Naive thymus-derived CD4-positive, alpha-beta T cell (primary cell): ENCODE measurements at regions of chr20 and their contacts with region 1.

Region 1: GRCh38 chr20:44210422-44211176 is at the start of gene OSER1:
- DNase-seq: peak; percentile 98 to 99 (median 99)
- ATAC-seq: peak; percentile 91
- H3K4me3 ChIP-seq: peak within 1 kb of the TSS; percentile 96
- H3K4me3 Mint-ChIP-seq: peak within 1 kb of the TSS; percentile 90 to 100 (median 95)
- H3K27ac ChIP-seq: peak within 1 kb of the TSS; percentile 97
- H3K27ac Mint-ChIP-seq: peak within 1 kb of the TSS; percentile 97 to 99 (median 98)
- H3K4me1 ChIP-seq: peaks cover 23 to 29% of the 10 kb centered on the region in 2 donors
- H3K4me1 Mint-ChIP-seq: peaks cover 45 to 78% (median 72%) of the 10 kb centered on the region in 7 donors
- H3K27me3 ChIP-seq: no peaks in the 10 kb centered on the region
- H3K27me3 Mint-ChIP-seq: peaks cover 0 to 4% (median 0%) of the 10 kb centered on the region in 5 donors
- total RNA-seq, gene OSER1: 25.0 to 115 (median 43.0) TPM

Region 2: DNA sequence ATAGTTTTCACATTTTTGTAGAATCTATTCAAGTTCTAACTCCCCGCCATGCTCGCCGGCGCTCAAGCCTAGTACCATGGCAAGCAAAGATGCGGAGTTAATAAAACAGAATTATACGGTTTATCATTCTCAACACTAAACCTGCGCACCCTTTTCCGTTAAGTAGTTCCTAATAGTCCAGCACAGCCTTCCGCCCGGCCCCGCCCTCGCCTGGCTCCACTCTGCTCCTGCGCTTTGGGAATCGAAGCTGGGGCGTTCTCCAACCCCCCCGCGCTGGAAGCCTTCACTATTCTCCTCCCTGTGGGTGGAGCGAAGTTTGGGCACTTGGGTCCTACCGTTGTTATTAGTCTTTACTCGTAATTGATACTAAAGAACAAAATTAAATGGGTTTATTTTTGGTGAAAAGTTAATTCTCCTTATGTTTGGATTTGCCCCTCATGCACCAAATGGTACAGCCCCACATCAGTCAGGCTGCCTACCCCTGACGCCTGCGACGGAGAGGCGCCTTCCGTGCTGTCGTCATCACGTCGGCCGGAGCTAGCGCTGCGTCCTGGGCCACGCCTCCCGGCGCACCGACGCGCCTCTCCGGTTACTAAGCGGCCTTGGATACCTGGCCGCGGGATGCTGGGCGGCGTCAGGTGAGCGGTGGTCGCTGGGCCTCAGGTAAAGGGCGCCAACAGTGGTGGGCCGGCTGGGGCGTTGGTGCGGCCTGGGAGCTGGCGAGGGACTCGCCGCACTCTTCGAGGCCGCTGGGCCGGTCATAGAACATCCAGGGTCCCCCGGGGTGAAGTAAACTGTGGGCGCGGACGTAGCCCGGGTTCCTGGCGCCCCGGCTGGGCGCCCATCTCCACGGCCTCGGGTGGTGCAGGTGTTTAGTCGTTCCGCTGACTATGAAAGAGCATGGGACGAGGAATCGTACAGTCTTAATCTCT is 619.9 kb before region 1 on chr20 and contains the start of gene IFT52:
- CTCF ChIA-PET with region 1: no interaction called
- POLR2A ChIA-PET with region 1: no interaction called
- intact Hi-C with region 1: loop called (anchors 2 kb)
- DNase-seq: peak; percentile 76 to 89 (median 87)
- ATAC-seq: peak; percentile 98
- H3K4me3 ChIP-seq: peak within 1 kb of the TSS; percentile 90
- H3K4me3 Mint-ChIP-seq: peak within 1 kb of the TSS; percentile 90 to 97 (median 94)
- H3K27ac ChIP-seq: peak within 1 kb of the TSS; percentile 88
- H3K27ac Mint-ChIP-seq: peak within 1 kb of the TSS; percentile 91 to 98 (median 97)
- H3K4me1 ChIP-seq: peaks cover 5 to 10% of the 10 kb centered on the region in 2 donors
- H3K4me1 Mint-ChIP-seq: peaks cover 17 to 21% (median 21%) of the 10 kb centered on the region in 7 donors
- H3K27me3 ChIP-seq: no peaks in the 10 kb centered on the region
- H3K27me3 Mint-ChIP-seq: peaks cover 0 to 5% (median 0%) of the 10 kb centered on the region in 5 donors
- total RNA-seq, gene IFT52: 14.8 to 19.7 (median 16.9) TPM

Region 3: GRCh38 chr20:44069203-44070011 is 141.2 kb before region 1 on chr20:
- CTCF ChIA-PET with region 1: no interaction called
- POLR2A ChIA-PET with region 1: no interaction called
- intact Hi-C with region 1: loop called in 1 of 2 experiments (anchors 1 kb)
- DNase-seq: peak; percentile 47 to 97 (median 90)
- ATAC-seq: peak; percentile 65
- H3K4me3 ChIP-seq: peak overlapping the region; percentile 60
- H3K4me3 Mint-ChIP-seq: peak overlapping the region; percentile 70 to 93 (median 86)
- H3K27ac ChIP-seq: peak overlapping the region; percentile 97
- H3K27ac Mint-ChIP-seq: peak overlapping the region; percentile 94 to 100 (median 99)
- H3K4me1 ChIP-seq: peaks cover 31 to 77% of the 10 kb centered on the region in 2 donors
- H3K4me1 Mint-ChIP-seq: peaks cover 40 to 96% (median 81%) of the 10 kb centered on the region in 7 donors
- H3K27me3 ChIP-seq: no peaks in the 10 kb centered on the region
- H3K27me3 Mint-ChIP-seq: peaks cover 0 to 16% (median 0%) of the 10 kb centered on the region in 5 donors

Region 4: GRCh38 chr20:44196271-44196670 is 14.3 kb before region 1 on chr20:
- CTCF ChIA-PET with region 1: no interaction called
- POLR2A ChIA-PET with region 1: interaction called, 7 read pairs
- intact Hi-C with region 1: loop called in 1 of 2 experiments (anchors 1 kb)
- DNase-seq: peak in 1 of 9 donors; percentile 14
- ATAC-seq: peak; percentile 50
- H3K4me3 ChIP-seq: no peak overlapping the region
- H3K4me3 Mint-ChIP-seq: no peak overlapping the region
- H3K27ac ChIP-seq: no peak overlapping the region
- H3K27ac Mint-ChIP-seq: peak overlapping the region in 2 of 9 donors; percentile 22 to 30
- H3K4me1 ChIP-seq: no peaks in the 10 kb centered on the region
- H3K4me1 Mint-ChIP-seq: peaks cover 16 to 29% (median 20%) of the 10 kb centered on the region in 7 donors
- H3K27me3 ChIP-seq: no peaks in the 10 kb centered on the region
- H3K27me3 Mint-ChIP-seq: peaks cover 0 to 6% (median 0%) of the 10 kb centered on the region in 5 donors

Region 5: GRCh38 chr20:44435630-44436335 is 225.2 kb after region 1 on chr20:
- CTCF ChIA-PET with region 1: no interaction called
- POLR2A ChIA-PET with region 1: no interaction called
- intact Hi-C with region 1: no loop called
- DNase-seq: no peak
- ATAC-seq: peak; percentile 71
- H3K4me3 ChIP-seq: no peak overlapping the region
- H3K4me3 Mint-ChIP-seq: no peak overlapping the region
- H3K27ac ChIP-seq: no peak overlapping the region
- H3K27ac Mint-ChIP-seq: no peak overlapping the region
- H3K4me1 ChIP-seq: no peaks in the 10 kb centered on the region
- H3K4me1 Mint-ChIP-seq: no peaks in the 10 kb centered on the region
- H3K27me3 ChIP-seq: no peaks in the 10 kb centered on the region
- H3K27me3 Mint-ChIP-seq: peaks cover 0 to 25% (median 9%) of the 10 kb centered on the region in 5 donors

Region 6: GRCh38 chr20:44475694-44476560 is 265.3 kb after region 1 on chr20 and contains the start of gene TTPAL:
- CTCF ChIA-PET with region 1: no interaction called
- POLR2A ChIA-PET with region 1: interaction called, 8 read pairs
- intact Hi-C with region 1: loop called (anchors 1 to 5 kb)
- DNase-seq: peak; percentile 83 to 95 (median 89)
- ATAC-seq: peak; percentile 98
- H3K4me3 ChIP-seq: peak within 1 kb of the TSS; percentile 65
- H3K4me3 Mint-ChIP-seq: peak within 1 kb of the TSS; percentile 87 to 96 (median 91)
- H3K27ac ChIP-seq: peak within 1 kb of the TSS; percentile 97
- H3K27ac Mint-ChIP-seq: peak within 1 kb of the TSS; percentile 86 to 97 (median 94)
- H3K4me1 ChIP-seq: peaks cover 12 to 17% of the 10 kb centered on the region in 2 donors
- H3K4me1 Mint-ChIP-seq: peaks cover 14 to 43% (median 31%) of the 10 kb centered on the region in 7 donors
- H3K27me3 ChIP-seq: no peaks in the 10 kb centered on the region
- H3K27me3 Mint-ChIP-seq: no peaks in the 10 kb centered on the region
- total RNA-seq, gene TTPAL: 12.0 to 20.7 (median 17.0) TPM

Region 7: DNA sequence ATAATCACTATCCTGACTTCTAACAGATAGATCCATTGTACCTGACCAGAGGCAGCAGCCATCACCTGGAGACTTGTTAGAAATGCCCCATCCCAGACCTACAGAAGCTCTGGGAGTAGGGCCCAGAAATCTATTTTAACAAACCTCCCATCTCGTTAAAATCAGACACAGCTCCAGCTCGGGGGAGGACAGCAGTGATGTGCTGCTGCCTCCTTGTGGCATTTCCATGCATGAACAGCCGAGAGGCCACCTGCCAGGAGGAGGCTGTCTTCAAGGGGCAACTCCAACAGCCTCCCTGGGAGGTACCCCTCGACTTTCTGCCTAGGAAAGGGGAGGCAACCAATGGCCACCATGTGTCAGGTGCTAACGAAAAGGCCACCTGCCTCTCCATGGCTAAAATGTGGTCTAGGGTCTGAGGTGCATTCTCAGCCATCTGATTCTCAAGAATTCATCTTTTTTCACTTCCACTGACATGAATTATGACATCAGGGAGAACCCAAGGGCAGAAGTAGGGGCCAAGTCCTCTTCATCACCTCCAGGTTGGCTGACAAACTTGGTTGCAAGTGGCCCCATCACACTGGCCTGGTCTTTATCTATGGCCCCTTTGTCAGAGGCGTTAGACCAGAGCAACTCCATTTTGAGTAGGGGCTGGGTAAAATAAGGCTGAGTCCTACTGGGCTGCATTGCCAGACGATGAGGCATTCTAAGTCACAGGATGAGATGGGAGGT is 522.9 kb after region 1 on chr20:
- CTCF ChIA-PET with region 1: interaction called, 3 read pairs
- POLR2A ChIA-PET with region 1: no interaction called
- intact Hi-C with region 1: loop called in 1 of 2 experiments (anchors 2 kb)
- DNase-seq: peak; percentile 34 to 73 (median 57)
- ATAC-seq: peak; percentile 77
- H3K4me3 ChIP-seq: no peak overlapping the region
- H3K4me3 Mint-ChIP-seq: no peak overlapping the region
- H3K27ac ChIP-seq: no peak overlapping the region
- H3K27ac Mint-ChIP-seq: peak overlapping the region in 1 of 9 donors; percentile 32
- H3K4me1 ChIP-seq: no peaks in the 10 kb centered on the region
- H3K4me1 Mint-ChIP-seq: peaks cover 11 to 23% (median 20%) of the 10 kb centered on the region in 7 donors
- H3K27me3 ChIP-seq: no peaks in the 10 kb centered on the region
- H3K27me3 Mint-ChIP-seq: no peaks in the 10 kb centered on the region

Region 8: GRCh38 chr20:44966030-44966961 is 755.7 kb after region 1 on chr20 and contains the start of gene STK4:
- CTCF ChIA-PET with region 1: no interaction called
- POLR2A ChIA-PET with region 1: interaction called, 3 read pairs
- intact Hi-C with region 1: loop called (anchors 1 to 2 kb)
- DNase-seq: peak; percentile 93 to 98 (median 96)
- ATAC-seq: peak; percentile 93
- H3K4me3 ChIP-seq: peak within 1 kb of the TSS; percentile 75
- H3K4me3 Mint-ChIP-seq: peak within 1 kb of the TSS; percentile 93 to 100 (median 95)
- H3K27ac ChIP-seq: peak within 1 kb of the TSS; percentile 91
- H3K27ac Mint-ChIP-seq: peak within 1 kb of the TSS; percentile 80 to 98 (median 90)
- H3K4me1 ChIP-seq: peaks cover 16 to 17% of the 10 kb centered on the region in 2 donors
- H3K4me1 Mint-ChIP-seq: peaks cover 32 to 60% (median 55%) of the 10 kb centered on the region in 7 donors
- H3K27me3 ChIP-seq: no peaks in the 10 kb centered on the region
- H3K27me3 Mint-ChIP-seq: no peaks in the 10 kb centered on the region
- total RNA-seq, gene STK4: 207 to 383 (median 267) TPM